ENCODE measurements at regions of chr20 and their contacts with region 1.

Region 1: DNA sequence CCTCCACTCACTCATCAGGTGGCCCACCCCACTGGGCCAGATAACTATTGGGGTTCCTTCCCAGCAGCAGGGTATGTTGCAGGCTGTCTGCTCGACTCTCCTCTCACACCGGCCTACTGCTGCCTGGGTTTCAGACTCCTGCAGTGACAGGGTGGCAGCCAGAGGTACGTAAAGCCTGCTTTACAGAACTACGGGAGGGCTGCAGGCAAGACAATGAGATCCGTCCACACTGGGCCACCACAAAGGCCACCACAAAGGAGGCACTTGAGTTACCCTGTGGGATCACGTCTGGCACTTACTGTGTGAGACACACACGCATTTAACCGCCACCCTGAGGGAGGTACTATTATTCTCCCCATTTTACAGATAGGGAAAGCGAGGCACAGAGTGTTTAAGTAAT is 78.5 kb downstream of the NFATC2 start:
- DNase-seq: no peak
- H3K4me3 ChIP-seq: no peak overlapping the region
- H3K27ac ChIP-seq: no peak overlapping the region
- H3K4me1 ChIP-seq: no peaks in the 10 kb centered on the region
- H3K27me3 ChIP-seq: no peaks in the 10 kb centered on the region
- CTCF ChIP-seq: no peak
- POLR2A ChIP-seq: no peak

Region 2: DNA sequence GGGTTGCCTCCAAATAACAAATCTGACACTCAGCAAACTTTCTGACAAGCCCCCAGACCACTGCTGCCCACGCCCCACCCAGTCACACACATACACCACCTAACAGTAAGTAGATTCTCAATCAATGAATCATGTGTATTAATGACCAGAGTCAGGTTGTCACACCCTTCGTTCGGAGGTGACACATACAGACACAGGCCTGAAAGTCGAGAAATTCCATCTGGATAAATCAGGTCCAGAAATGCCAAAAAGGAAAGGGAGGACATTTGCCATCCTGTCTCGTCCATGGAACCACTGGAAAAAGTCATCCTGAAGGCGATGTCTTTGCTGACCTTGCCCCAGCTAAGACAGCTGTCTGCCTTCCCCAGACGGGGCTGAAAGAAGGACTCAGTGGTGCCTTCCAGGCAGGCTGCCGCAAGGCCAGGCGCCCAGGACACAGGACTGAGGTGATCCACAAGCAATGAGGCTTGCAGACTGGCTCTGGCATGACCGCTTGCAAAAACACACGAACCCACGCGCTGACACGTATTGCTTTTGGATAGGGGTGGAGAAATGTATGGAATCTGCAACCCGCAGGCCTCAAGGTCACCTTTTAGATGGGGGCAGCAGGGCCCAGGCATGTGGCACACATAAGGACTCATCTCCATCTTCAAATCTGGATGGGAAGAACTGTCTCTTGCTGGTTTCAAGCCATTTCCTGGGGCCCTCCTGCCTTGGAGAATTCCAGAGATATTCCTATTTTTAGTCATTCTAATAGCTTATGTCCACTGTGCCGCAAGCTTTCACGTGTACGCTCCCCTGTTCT is 69.5 kb after region 1 on chr20:
- intact Hi-C with region 1: loop called (anchors 2 kb)
- DNase-seq: no peak
- H3K4me3 ChIP-seq: no peak overlapping the region
- H3K27ac ChIP-seq: peak overlapping the region; percentile 28 to 61
- H3K4me1 ChIP-seq: no peaks in the 10 kb centered on the region
- H3K27me3 ChIP-seq: no peaks in the 10 kb centered on the region
- CTCF ChIP-seq: no peak
- POLR2A ChIP-seq: no peak

Measured in breast epithelium (tissue), 4 donors.